ENCODE measurements at regions of chr7 and their contacts with region 1.

Region 1: DNA sequence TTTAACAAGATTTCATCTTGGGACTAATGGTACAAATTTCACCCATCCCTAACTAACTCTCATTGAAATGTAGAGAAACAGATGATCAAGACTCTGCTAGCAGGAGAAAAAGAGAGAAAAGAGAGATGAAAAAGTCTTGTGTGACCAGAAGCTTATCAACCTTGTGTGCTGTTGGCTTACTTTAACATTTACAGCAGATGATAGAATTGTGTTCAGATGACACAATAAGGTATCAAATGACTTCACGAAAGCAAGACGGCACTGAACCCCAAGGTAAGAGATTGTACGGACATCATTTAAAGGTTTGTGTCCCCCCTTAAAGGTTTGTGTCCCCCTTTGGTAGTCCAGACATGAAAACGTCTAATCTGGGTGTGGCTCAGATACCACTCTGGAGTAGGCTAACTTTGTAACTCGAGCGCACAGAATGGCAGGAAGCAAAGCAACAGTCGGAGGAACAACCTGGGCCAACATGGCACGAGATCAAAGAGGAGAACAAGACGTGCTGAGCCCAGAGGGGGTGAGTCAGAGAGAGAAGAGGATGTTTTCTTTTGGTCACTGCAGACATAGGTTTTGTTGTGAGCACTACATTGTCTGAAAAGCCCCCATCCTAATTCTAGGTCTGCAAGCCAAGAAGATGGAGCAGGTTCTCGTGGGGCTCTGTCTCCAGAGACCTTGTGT is 10.4 kb upstream of the LMBR1 start:
- DNase-seq: no peak
- H3K4me3 ChIP-seq: no peak overlapping the region
- CTCF ChIP-seq: no peak

Region 2: DNA sequence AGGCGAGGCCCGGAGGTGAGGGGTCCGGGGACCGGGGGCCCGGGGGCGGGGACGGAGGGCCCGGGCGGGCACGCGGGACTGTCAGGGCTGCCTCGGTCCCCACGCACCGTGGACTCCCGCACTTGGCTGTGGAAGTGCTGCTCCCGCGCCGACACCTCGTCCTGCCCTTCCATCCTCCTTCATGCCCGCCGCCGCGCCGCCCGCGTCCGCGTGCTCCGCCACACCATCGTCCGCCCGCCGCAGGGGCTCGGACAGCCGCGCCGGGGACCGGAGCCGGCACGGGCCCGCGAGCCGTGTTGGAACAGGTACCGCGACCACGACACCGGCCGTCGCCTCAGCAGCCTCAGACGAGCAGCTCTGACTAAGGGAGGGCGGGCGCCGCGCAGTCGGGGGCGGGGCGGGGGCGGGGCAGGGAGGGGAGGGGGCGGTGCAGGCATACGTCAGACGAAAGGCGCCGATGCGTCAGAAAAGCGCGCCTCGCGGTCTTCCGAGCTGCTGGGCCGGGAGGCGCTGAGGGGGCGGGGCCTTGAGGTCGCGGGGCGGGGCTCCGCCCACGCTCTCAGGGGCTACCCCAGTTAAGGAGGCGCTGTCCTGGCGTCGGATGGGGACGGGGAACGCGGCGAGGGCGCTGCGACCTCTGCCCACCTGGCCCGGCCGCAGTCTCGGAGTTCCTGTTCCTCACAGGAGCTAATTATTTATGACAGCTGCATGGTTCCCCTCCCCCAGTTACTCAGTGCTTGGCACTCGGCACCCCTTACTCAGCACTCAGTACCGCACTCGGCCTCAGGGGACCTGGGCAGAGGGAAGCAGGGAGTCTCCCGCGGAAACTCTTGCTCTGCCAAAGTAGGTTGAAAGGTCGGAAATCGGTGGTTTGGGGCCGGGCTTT is 10.3 kb before region 1 on chr7 and contains the start of gene LMBR1:
- CTCF ChIA-PET with region 1: interaction called, 13 read pairs
- POLR2A ChIA-PET with region 1: no interaction called
- DNase-seq: peak; percentile 46
- H3K4me3 ChIP-seq: peak within 1 kb of the TSS; percentile 87
- CTCF ChIP-seq: peak; percentile 33